Ascending aorta (tissue), 2 donors: ENCODE measurements at regions of chr19 and their contacts with region 1.

Region 1: DNA sequence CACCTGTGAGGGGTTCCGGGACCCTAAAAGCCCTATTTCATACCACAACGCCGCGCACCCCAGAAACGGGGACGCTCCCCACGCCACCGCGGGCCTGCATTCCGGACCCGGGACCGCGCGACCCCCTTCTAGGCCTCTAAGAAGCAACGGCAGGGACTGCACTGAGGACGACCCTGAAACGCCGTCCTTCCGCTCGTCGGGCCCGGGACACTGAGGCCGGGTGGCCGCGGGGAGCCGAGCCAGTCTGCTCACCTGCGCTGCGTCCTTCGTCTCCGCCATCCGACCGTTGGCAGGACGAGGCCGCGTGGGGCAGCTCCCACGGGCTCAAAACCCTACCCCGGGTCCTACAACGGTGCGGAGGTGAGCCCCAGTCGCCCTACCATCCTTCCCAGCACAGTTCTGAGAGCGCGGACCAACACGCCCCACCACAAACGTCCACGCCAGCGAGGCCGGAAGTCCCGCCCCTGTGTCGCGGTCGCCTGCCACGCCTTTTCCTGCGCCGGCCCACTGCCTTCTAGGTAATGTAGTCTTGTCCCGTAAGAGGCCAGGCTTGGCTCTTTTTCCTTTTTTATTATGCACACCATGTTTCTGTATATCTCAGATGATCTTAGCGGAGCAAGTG is at the start of gene ZNF550:
- DNase-seq: peak; percentile 56 to 94
- H3K4me3 ChIP-seq: peak within 1 kb of the TSS; percentile 84 to 99
- H3K27ac ChIP-seq: peak within 1 kb of the TSS; percentile 2 to 44
- H3K4me1 ChIP-seq: peaks cover 0 to 8% of the 10 kb centered on the region in 2 donors
- H3K27me3 ChIP-seq: no peaks in the 10 kb centered on the region
- CTCF ChIP-seq: no peak
- total RNA-seq, gene ZNF550: 22.7 TPM

Region 2: GRCh38 chr19:57527136-57527881 is 32.2 kb before region 1 on chr19 and contains the start of gene ZNF549:
- intact Hi-C with region 1: loop called (anchors 1 kb)
- DNase-seq: peak; percentile 63 to 94
- H3K4me3 ChIP-seq: peak within 1 kb of the TSS; percentile 81 to 85
- H3K27ac ChIP-seq: peak within 1 kb of the TSS; percentile 64 to 74
- H3K4me1 ChIP-seq: peaks cover 2 to 3% of the 10 kb centered on the region in 2 donors
- H3K27me3 ChIP-seq: no peaks in the 10 kb centered on the region
- CTCF ChIP-seq: no peak
- total RNA-seq, gene ZNF549: 2.2 TPM

Region 3: GRCh38 chr19:57546513-57546912 is 13.0 kb before region 1 on chr19:
- intact Hi-C with region 1: no loop called
- DNase-seq: no peak
- H3K4me3 ChIP-seq: no peak overlapping the region
- H3K27ac ChIP-seq: no peak overlapping the region
- H3K4me1 ChIP-seq: no peaks in the 10 kb centered on the region
- H3K27me3 ChIP-seq: no peaks in the 10 kb centered on the region
- CTCF ChIP-seq: no peak

Region 4: GRCh38 chr19:57599761-57600383 is 40.4 kb after region 1 on chr19 and contains the start of gene ZNF530:
- intact Hi-C with region 1: loop called (anchors 1 kb)
- DNase-seq: peak; percentile 64 to 97
- H3K4me3 ChIP-seq: peak within 1 kb of the TSS; percentile 56 to 70
- H3K27ac ChIP-seq: no peak within 1 kb of the TSS
- H3K4me1 ChIP-seq: peaks cover 0 to 4% of the 10 kb centered on the region in 2 donors
- H3K27me3 ChIP-seq: no peaks in the 10 kb centered on the region
- CTCF ChIP-seq: no peak
- total RNA-seq, gene ZNF530: 2.6 TPM

Region 5: GRCh38 chr19:57651654-57651996 is 92.1 kb after region 1 on chr19:
- intact Hi-C with region 1: no loop called
- DNase-seq: no peak
- H3K4me3 ChIP-seq: no peak overlapping the region
- H3K27ac ChIP-seq: no peak overlapping the region
- H3K4me1 ChIP-seq: no peaks in the 10 kb centered on the region
- H3K27me3 ChIP-seq: no peaks in the 10 kb centered on the region
- CTCF ChIP-seq: no peak